GM10248 (cell line): ENCODE measurements at regions of chr2 and their contacts with region 1.

Region 1: DNA sequence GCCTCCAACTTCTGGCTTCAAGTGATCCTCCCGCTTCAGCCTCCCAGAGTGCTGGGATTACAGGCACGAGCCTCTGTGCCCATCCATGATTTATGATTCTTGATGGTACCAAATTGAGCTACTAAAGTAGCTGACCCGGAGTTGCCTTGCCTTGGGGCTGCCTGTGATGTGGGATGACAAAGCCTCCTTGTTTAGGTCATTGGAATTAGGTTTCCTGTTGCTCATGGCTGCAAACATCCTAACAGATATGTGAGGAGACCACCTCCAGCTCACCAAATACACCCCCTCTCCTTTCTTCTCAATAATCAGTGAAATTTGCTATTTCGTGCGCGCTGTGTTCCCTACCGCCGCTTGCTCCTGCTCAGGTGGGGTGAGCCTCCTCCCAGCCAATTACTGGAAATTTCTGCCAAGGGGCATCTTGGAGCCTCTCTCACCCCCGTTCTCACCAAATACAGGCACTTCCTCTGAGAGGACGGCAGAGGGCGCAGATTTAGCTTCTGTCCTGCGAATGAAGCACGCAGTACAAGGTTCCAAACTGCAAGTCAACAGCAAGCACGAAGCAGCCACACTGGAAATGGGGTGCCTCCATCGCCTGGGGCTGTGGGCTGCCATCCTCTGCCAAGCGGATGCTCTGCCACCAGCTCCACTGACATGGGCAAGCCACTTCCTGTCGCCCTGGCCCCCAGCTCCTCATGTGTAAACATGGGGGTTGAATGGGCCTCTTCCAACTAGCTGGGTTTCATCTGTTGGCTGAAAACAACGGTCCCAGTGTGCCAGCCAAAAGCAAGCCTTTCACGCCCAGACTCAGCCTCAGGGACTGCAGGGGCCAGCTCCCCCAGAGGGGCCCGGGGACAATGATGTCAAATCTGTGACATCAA is 71.7 kb downstream of the NCAPH start:
- DNase-seq: peak; percentile 85
- CTCF ChIP-seq: peak; percentile 86

Region 2: GRCh38 chr2:96396095-96396494 is 11.2 kb before region 1 on chr2:
- CTCF ChIA-PET with region 1: interaction called, 20 read pairs
- POLR2A ChIA-PET with region 1: no interaction called
- DNase-seq: no peak
- CTCF ChIP-seq: no peak

Region 3: DNA sequence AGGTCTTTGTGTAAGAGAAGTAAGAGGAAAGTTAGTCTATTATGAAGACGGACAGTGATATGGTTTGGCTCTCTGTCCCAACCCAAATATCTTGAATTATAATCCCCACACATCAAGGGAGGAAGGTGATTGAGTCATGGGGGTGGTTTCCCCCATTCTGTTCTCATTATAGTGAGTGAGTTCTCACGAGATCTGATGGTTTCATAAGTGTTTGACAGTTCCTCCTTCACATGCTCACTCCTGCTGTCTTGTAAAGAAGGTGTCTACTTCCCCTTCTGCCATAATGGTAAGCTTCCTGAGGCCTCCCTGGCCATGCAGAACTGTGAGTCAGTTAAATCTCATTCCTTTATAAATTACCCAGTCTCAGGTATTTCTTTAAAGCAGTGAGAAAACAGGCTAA is 30.2 kb after region 1 on chr2:
- CTCF ChIA-PET with region 1: interaction called, 10 read pairs
- POLR2A ChIA-PET with region 1: no interaction called
- DNase-seq: no peak
- CTCF ChIP-seq: no peak

Region 4: DNA sequence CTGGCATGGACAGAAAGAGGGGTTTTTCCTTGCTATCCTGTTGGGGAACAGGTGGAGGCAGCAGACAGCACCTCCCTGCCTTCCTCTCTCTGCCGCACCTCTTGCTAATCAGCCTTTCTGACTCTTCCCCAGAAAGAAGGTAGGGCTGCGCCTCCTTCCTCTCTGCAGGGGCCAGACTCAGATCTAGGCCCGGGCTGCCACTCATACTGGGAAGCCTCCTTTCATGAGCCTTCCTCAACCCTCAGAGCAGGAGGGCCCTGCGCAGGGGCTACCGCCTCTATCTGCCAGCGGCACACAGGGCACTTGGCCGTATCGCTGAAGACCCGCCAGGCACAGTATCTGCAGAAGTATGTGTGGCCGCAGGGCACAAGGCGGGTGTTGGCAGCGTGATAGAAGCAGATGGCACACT is 90.7 kb after region 1 on chr2:
- CTCF ChIA-PET with region 1: interaction called, 269 read pairs
- POLR2A ChIA-PET with region 1: no interaction called
- DNase-seq: no peak
- CTCF ChIP-seq: no peak

Region 5: DNA sequence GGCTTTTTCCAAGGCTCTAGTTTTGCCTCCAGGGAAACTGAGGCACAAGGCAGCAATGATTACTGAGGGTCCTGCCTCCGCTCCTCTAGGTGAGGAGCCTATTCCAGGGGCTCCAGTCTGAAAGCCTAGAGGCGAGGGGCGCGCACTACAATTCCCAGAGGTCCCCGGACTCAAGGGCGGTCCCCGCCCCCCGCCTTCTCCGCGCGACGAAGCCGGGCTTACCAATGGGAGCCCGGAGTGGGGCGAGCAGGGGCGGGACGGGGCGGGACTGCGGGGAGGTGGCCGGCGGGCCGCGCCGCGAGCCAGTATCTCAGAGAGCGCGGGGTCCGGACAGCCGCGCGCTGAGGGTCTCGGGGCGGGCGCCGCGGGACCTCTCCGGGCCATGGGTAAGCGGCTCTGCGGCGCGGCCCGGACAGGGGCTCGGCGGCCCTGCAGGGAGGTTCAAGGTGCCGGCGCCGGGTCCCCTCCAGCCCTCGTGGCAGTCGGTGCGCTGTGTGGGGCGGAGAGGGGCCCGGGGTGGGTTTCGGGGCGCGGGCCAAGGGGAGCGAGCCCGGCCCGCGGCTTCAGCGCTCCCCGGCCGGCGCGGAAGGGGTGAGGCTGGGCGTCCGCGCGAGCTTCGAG is 129.3 kb after region 1 on chr2 and contains the start of gene ARID5A:
- CTCF ChIA-PET with region 1: interaction called, 10 read pairs
- POLR2A ChIA-PET with region 1: interaction called, 5 read pairs
- DNase-seq: peak; percentile 93
- CTCF ChIP-seq: no peak

Region 6: DNA sequence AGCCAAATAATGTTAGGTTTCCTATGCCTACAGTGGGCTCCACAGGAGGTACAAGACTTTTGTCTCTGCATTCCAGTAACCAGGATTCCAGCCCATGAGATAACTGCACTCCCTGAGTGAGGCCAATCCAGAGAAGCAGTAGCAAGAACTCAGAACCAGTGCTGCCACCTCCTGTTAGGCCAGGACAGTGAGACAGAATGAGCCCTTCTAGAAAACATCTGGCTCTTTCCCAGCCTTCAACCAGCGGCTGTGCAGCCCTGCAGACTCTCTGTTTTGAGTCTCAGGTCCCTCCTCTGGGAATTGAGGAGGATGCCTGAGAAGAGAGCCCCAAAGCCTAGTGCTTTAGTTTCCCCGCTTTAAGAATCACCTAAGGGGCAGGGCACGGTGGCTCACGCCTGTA is 173.5 kb after region 1 on chr2:
- CTCF ChIA-PET with region 1: interaction called, 11 read pairs
- POLR2A ChIA-PET with region 1: no interaction called
- DNase-seq: no peak
- CTCF ChIP-seq: peak; percentile 39